Activated CD4-positive, alpha-beta T cell treated with anti-CD3 and anti-CD28 coated beads for 36 hours (primary cell): ENCODE measurements at regions of chr2 and their contacts with region 1.

Region 1: DNA sequence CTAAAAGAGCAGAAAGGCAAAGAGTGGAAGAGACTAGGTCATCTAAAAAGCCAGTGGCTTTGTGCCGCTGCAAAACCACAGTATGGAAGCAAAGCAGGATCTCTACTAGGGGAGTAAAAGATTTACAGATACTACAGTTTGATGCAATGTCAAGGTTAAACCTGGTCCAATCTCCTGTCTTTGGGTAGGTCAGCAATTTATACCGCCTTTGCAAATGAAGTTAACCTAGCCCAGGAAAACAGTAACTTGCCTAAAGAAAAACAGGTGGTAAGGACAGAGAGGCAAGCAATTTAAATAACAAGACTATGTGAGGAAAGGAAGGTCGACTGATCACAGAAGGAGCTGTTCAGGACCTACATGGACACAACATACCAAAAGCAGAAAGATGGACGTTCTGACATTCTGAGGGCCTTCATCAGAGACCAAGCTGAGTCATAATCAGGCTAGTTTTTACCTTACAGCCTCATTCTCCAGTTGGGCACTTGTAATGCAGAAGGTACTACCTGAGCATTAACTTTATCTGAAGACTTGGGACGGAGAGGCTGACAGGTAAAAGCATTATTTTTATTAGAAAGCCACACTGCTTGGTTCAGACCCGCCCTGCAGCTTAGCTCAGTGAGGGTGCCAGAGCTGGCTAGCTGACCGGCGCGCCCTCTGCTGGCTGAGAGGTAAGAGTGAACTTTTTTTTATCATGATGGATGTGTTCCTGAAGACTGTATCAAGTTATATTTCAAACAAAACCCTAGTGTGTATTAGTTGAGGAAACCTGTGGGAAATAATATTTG is 15.9 kb downstream of the CDKL4 start:
- DNase-seq: peak; percentile 91
- ATAC-seq: peak; percentile 83
- H3K4me3 Mint-ChIP-seq: peak overlapping the region; percentile 49
- H3K27ac Mint-ChIP-seq: peak overlapping the region; percentile 40
- H3K4me1 Mint-ChIP-seq: peaks cover 32% of the 10 kb centered on the region
- H3K27me3 Mint-ChIP-seq: peaks cover 6% of the 10 kb centered on the region

Region 2: DNA sequence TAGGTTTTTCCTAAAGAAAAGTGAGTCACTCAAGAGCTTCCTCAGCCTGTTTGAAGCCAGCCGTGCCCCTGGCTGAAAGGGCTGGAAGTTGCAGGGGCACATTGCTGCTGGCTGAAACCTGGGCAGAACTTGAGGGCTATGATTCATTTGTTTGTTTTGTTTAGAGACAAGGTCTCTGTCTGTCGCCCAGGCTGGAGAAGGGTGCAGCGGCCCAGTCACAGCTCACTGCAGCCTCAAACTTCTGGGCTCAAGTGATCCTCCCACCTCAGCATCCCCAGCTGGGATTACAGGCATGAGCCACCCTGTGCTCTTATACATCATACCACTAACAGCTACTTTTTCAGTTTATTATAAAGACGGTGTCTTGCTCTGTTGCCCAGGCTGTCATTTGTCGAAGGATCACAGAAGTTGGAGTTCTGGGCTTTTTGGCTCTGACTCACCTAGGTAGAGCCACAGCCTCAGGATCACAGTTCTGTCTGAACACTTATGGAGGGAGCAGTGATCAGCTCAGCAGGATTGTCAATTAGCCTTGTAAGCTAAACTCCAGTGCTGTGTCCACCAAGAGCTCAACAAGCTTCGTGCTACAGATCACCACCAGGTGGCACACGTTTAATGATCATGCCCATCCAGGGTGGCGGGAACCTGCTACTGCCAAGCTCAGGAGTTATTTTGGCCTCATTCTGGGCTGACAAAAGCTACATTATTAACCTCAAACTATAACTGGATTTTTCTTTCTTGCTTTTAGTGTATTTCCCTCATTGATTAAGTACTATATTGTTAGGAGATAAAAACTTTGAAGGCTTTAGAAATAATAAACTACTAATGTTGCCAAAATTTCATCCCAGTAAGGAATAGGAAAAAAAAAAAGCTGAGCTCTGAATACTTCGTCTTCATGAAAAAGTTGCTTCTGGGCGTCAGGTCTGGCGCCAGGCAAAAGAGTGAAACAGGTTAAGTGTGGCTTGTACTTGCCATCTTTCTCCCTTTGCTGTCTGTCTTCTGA is 280.3 kb before region 1 on chr2:
- CTCF ChIA-PET with region 1: interaction called, 126 read pairs
- POLR2A ChIA-PET with region 1: no interaction called
- intact Hi-C with region 1: loop called (anchors 1 kb)
- DNase-seq: peak; percentile 84
- ATAC-seq: peak; percentile 84
- H3K4me3 Mint-ChIP-seq: no peak overlapping the region
- H3K27ac Mint-ChIP-seq: no peak overlapping the region
- H3K4me1 Mint-ChIP-seq: no peaks in the 10 kb centered on the region
- H3K27me3 Mint-ChIP-seq: no peaks in the 10 kb centered on the region

Region 3: GRCh38 chr2:39039072-39039471 is 188.7 kb before region 1 on chr2:
- CTCF ChIA-PET with region 1: interaction called, 11 read pairs
- POLR2A ChIA-PET with region 1: no interaction called
- intact Hi-C with region 1: no loop called
- DNase-seq: no peak
- ATAC-seq: no peak
- H3K4me3 Mint-ChIP-seq: no peak overlapping the region
- H3K27ac Mint-ChIP-seq: no peak overlapping the region
- H3K4me1 Mint-ChIP-seq: no peaks in the 10 kb centered on the region
- H3K27me3 Mint-ChIP-seq: no peaks in the 10 kb centered on the region

Region 4: DNA sequence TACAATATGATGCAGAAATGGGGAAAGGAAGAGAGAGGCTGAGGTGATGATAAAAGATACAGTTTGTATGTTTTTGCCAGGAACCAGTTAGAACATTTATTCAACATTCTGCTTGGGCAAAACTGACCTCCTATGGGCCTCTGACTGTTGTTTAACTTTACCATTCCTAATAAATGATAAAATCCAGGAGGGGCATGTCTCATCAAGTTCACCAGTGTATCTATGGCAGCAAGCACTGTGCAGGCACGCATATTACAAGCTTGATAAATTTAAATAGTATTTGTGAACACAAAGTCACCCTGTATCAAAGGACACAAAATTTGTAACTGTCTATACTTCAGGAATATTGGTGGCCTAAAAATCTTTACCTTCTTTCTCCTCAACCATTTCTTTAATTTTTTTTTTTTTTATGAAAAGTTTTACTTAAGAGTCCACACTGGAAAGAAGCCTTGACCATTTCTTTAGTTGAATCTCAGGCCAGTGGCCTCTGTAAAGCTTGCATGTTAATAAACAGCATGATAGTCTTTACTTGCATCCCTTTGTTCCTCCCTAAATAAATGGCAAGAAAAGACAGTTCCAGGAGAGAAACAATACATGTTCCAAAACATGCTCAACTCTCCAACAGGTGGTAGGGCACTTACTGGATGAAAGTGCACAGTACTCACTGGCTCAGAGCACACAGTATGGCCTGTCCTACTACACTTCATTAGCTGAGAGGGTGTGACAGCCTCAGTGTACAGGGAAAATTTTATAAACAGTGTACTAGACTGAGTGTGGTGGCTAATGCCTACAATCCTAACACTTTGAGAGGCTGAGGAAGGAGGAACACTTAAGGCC is 159.3 kb before region 1 on chr2:
- CTCF ChIA-PET with region 1: interaction called, 322 read pairs
- POLR2A ChIA-PET with region 1: no interaction called
- intact Hi-C with region 1: no loop called
- DNase-seq: no peak
- ATAC-seq: peak; percentile 14
- H3K4me3 Mint-ChIP-seq: no peak overlapping the region
- H3K27ac Mint-ChIP-seq: no peak overlapping the region
- H3K4me1 Mint-ChIP-seq: peaks cover 21% of the 10 kb centered on the region
- H3K27me3 Mint-ChIP-seq: no peaks in the 10 kb centered on the region

Region 5: GRCh38 chr2:39133215-39133851 is 94.5 kb before region 1 on chr2:
- CTCF ChIA-PET with region 1: interaction called, 71 read pairs
- POLR2A ChIA-PET with region 1: no interaction called
- intact Hi-C with region 1: no loop called
- DNase-seq: no peak
- ATAC-seq: no peak
- H3K4me3 Mint-ChIP-seq: no peak overlapping the region
- H3K27ac Mint-ChIP-seq: peak overlapping the region; percentile 60
- H3K4me1 Mint-ChIP-seq: peaks cover 41% of the 10 kb centered on the region
- H3K27me3 Mint-ChIP-seq: peaks cover 2% of the 10 kb centered on the region

Region 6: DNA sequence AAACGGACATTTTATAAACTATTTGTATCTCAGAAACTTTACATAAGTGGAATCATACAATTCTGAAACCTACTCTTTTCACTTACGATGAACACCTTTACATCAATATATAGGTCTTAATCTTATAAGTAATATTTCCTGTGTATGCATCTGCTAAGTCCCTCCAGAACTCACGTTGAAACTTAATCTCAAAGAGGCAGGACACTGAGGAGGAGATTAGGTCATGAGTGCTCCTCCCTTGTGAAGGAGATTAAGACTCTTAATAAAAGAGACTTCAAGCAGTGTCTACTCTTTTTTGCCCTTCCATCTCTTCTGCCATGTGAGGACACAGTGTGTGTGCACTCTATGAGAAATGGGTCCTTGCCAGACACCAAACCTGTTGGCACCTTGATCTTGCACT is 110.7 kb after region 1 on chr2:
- CTCF ChIA-PET with region 1: no interaction called
- POLR2A ChIA-PET with region 1: no interaction called
- intact Hi-C with region 1: no loop called
- DNase-seq: no peak
- ATAC-seq: no peak
- H3K4me3 Mint-ChIP-seq: no peak overlapping the region
- H3K27ac Mint-ChIP-seq: no peak overlapping the region
- H3K4me1 Mint-ChIP-seq: peaks cover 4% of the 10 kb centered on the region
- H3K27me3 Mint-ChIP-seq: no peaks in the 10 kb centered on the region